ENCODE measurements at regions of chr20 and their contacts with region 1.

Region 1: GRCh38 chr20:48697879-48698724 is 129.7 kb downstream of the PREX1 start:
- DNase-seq: no peak
- H3K4me3 Mint-ChIP-seq: no peak overlapping the region
- H3K27ac Mint-ChIP-seq: no peak overlapping the region
- H3K4me1 Mint-ChIP-seq: peaks cover 3% of the 10 kb centered on the region
- H3K27me3 Mint-ChIP-seq: no peaks in the 10 kb centered on the region

Region 2: GRCh38 chr20:48679550-48680187 is 18.4 kb before region 1 on chr20:
- intact Hi-C with region 1: loop called (anchors 1 kb)
- DNase-seq: no peak
- H3K4me3 Mint-ChIP-seq: no peak overlapping the region
- H3K27ac Mint-ChIP-seq: no peak overlapping the region
- H3K4me1 Mint-ChIP-seq: no peaks in the 10 kb centered on the region
- H3K27me3 Mint-ChIP-seq: no peaks in the 10 kb centered on the region

Region 3: GRCh38 chr20:48709744-48710695 is 11.9 kb after region 1 on chr20:
- intact Hi-C with region 1: no loop called
- DNase-seq: no peak
- H3K4me3 Mint-ChIP-seq: no peak overlapping the region
- H3K27ac Mint-ChIP-seq: no peak overlapping the region
- H3K4me1 Mint-ChIP-seq: peaks cover 33% of the 10 kb centered on the region
- H3K27me3 Mint-ChIP-seq: no peaks in the 10 kb centered on the region

Region 4: GRCh38 chr20:48807661-48808427 is 109.7 kb after region 1 on chr20:
- intact Hi-C with region 1: no loop called
- DNase-seq: no peak
- H3K4me3 Mint-ChIP-seq: no peak overlapping the region
- H3K27ac Mint-ChIP-seq: no peak overlapping the region
- H3K4me1 Mint-ChIP-seq: peaks cover 4% of the 10 kb centered on the region
- H3K27me3 Mint-ChIP-seq: no peaks in the 10 kb centered on the region

Measured in activated T-helper 2 cell treated with anti-CD3 and anti-CD28 coated beads, Interferon-gamma antibody, Interleukin-2, Interleukin-4, amounts not matched to agents 10 μg/mL and 5 μg/mL and 100 μg/mL, durations not matched to agents 14 hours and 24 hours and 36 hours (primary cell).